WTC11 (cell line): ENCODE measurements at regions of chr11 and their contacts with region 1.

Region 1: GRCh38 chr11:75204685-75205563 is 35.6 kb upstream of the TPBGL start:
- DNase-seq: peak; percentile 94
- ATAC-seq: peak; percentile 95
- H3K4me3 Mint-ChIP-seq: no peak overlapping the region
- H3K27ac Mint-ChIP-seq: no peak overlapping the region
- H3K4me1 Mint-ChIP-seq: peaks cover 28% of the 10 kb centered on the region
- H3K27me3 Mint-ChIP-seq: no peaks in the 10 kb centered on the region; the same call in 1 of the 2 replicates
- CTCF ChIP-seq: peak; percentile 95

Region 2: GRCh38 chr11:74929431-74930363 is 275.2 kb before region 1 on chr11:
- CTCF ChIA-PET with region 1: interaction called, 12 read pairs
- POLR2A ChIA-PET with region 1: no interaction called
- DNase-seq: peak; percentile 53
- ATAC-seq: peak; percentile 95
- H3K4me3 Mint-ChIP-seq: no peak overlapping the region
- H3K27ac Mint-ChIP-seq: no peak overlapping the region
- H3K4me1 Mint-ChIP-seq: no peaks in the 10 kb centered on the region
- H3K27me3 Mint-ChIP-seq: no peaks in the 10 kb centered on the region
- CTCF ChIP-seq: peak; percentile 56; the same call in 1 of the 2 replicates

Region 3: DNA sequence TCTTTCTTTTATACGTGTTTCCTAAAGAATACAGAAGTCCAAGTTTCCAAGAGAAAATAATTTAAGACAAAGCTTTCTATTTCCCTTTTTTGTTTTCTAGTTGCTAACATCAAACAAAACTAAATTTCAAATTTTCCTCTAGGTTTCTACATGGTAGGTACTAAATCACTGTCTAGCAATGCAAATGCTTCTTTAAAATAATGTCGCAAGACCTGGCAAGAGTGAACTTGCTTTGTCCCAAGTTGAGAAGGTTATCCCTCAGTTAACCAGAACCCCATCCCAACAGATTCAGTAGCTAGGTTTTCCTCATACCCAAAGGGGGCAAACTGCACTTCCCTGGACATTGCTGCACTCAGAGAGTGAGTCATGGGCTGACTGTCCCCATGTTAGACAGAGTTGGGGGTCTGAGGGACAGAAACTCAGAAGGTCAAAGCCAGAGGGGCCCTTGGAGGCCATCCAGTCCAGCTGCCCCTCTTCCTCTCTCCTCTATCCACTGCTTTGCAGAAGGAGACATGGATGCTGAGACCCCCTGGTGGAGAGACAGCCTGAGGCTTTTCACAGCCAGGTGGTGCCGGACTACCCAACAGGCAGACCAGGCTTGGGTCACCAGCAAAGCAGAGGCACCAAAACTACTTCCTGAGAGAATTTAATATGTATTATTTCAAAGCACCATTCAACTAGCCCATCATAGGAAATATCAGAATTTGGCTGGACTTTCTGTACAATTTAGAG is 131.3 kb before region 1 on chr11:
- CTCF ChIA-PET with region 1: interaction called, 11 read pairs
- POLR2A ChIA-PET with region 1: no interaction called
- DNase-seq: no peak
- ATAC-seq: peak; percentile 72; the same call in 1 of the 2 replicates
- H3K4me3 Mint-ChIP-seq: no peak overlapping the region
- H3K27ac Mint-ChIP-seq: no peak overlapping the region
- H3K4me1 Mint-ChIP-seq: peaks cover 9% of the 10 kb centered on the region
- H3K27me3 Mint-ChIP-seq: peaks cover 5% of the 10 kb centered on the region
- CTCF ChIP-seq: no peak

Region 4: DNA sequence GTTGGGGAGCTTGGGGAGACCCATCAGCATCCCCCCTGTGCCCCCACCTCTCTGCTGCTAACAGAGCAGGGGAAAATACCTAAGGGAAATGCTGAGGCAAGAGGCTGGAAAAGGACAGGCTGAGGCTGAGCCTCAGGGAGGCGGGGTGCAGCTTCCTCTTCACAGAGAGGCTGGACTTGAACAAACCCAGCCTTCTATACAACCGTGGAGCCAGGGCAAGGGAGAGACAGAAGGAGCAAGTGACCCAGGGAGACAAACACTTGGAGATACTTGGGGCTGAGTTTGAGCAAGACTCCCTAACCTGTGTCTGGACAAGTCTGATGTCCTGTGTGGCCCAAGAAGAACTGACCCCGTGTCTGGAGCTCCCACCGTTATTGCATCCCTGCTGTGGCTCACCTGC is 54.0 kb before region 1 on chr11 and contains the start of gene SLCO2B1:
- CTCF ChIA-PET with region 1: interaction called, 590 read pairs
- POLR2A ChIA-PET with region 1: no interaction called
- DNase-seq: no peak
- ATAC-seq: no peak
- H3K4me3 Mint-ChIP-seq: no peak within 1 kb of the TSS
- H3K27ac Mint-ChIP-seq: no peak within 1 kb of the TSS
- H3K4me1 Mint-ChIP-seq: no peaks in the 10 kb centered on the region
- H3K27me3 Mint-ChIP-seq: no peaks in the 10 kb centered on the region; the same call in 1 of the 2 replicates
- CTCF ChIP-seq: no peak
- total RNA-seq, gene SLCO2B1: 0.57 to 0.92 TPM (median 0.60 TPM) in 3 replicates

Region 5: DNA sequence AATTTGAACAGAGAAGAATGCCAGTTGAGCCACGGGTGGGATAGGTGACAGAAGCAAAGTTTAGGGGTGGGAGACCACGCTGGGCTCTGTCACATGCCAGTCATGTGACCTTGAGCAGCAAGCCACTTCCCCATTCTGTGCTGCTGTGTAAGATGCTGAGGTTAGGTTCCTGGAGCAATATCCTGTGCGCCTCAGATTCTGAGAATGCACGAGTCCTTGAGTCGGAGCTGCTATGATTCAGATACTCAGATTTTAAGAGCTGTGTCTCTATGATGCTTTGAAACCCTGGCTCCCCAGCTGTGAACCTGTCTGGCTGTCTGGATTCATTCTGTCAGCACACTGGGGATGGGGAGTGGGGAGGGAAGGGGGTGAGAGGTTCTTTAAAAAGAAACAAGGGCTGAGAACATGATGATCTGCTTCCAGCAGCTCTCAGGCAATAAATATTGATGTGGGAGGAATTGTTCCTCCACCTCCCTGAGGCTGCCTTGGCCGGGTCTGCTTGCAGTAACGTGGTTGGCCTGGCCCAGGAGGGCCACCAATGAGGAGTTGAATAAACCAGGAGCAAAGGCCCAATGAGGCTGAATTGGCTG is 30.0 kb before region 1 on chr11:
- CTCF ChIA-PET with region 1: interaction called, 15 read pairs
- POLR2A ChIA-PET with region 1: interaction called, 3 read pairs
- DNase-seq: no peak
- ATAC-seq: no peak; the same call in 1 of the 2 replicates
- H3K4me3 Mint-ChIP-seq: no peak overlapping the region
- H3K27ac Mint-ChIP-seq: no peak overlapping the region
- H3K4me1 Mint-ChIP-seq: peaks cover 11% of the 10 kb centered on the region
- H3K27me3 Mint-ChIP-seq: no peaks in the 10 kb centered on the region
- CTCF ChIP-seq: no peak

Region 6: GRCh38 chr11:75223954-75224643 is 19.2 kb after region 1 on chr11:
- CTCF ChIA-PET with region 1: interaction called, 31 read pairs
- POLR2A ChIA-PET with region 1: interaction called, 3 read pairs
- DNase-seq: no peak
- ATAC-seq: peak; percentile 85
- H3K4me3 Mint-ChIP-seq: no peak overlapping the region
- H3K27ac Mint-ChIP-seq: no peak overlapping the region
- H3K4me1 Mint-ChIP-seq: peaks cover 7% of the 10 kb centered on the region; the same call in 1 of the 2 replicates
- H3K27me3 Mint-ChIP-seq: peaks cover under 1% of the 10 kb centered on the region; the same call in 1 of the 2 replicates
- CTCF ChIP-seq: no peak

Region 7: GRCh38 chr11:75241036-75241905 is 36.3 kb after region 1 on chr11:
- CTCF ChIA-PET with region 1: interaction called, 111 read pairs
- POLR2A ChIA-PET with region 1: no interaction called
- DNase-seq: peak; percentile 89
- ATAC-seq: peak; percentile 74
- H3K4me3 Mint-ChIP-seq: peak overlapping the region; percentile 53
- H3K27ac Mint-ChIP-seq: no peak overlapping the region
- H3K4me1 Mint-ChIP-seq: peaks cover 19% of the 10 kb centered on the region
- H3K27me3 Mint-ChIP-seq: peaks cover 75% of the 10 kb centered on the region
- CTCF ChIP-seq: peak; percentile 90